Mucosa of descending colon (tissue), 3 donors: ENCODE measurements at regions of chr12 and their contacts with region 1.

Region 1: DNA sequence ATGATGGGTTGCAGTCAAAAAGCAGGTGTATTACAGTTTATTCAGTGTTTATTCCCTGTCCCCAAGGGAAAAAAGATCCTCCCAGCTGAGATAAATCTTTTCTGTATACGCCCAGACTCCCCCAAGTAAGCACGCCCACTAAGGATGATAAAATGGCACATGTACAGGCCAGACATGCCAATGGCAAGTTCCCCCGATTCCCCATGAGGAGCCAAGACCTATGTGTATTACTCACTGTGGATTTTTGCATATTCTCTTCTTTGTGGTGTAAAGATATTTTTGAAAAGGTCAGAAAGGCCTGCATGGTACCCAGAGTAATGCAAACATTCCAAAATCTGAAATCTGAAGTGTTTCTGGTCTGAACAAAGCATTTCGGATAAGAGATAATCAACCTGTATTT is 22.2 kb downstream of the NR2C1 start:
- DNase-seq: no peak
- ATAC-seq: no peak
- H3K4me3 ChIP-seq: no peak overlapping the region
- H3K4me1 ChIP-seq: no peaks in the 10 kb centered on the region
- CTCF ChIP-seq: no peak

Region 2: DNA sequence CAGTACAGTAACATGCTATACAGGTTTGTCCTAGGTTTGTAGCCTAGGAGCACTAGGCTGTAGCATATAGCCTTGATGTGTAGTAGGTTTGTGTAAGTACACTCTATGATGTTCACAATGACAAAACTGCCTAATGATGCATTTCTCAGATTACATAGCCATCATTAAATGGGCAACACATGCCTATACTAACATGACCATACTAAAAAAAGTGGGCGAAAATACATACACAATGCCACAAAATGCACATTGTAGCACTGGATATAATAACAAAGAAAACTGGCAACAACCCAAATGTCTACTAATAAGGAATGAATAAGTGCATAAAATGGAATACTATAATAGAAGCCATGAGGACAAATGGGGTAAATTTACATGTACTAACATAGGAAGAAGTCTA is 16.5 kb before region 1 on chr12:
- intact Hi-C with region 1: loop called in 1 of 2 experiments (anchors 2 kb)
- DNase-seq: no peak
- ATAC-seq: no peak
- H3K4me3 ChIP-seq: no peak overlapping the region
- H3K4me1 ChIP-seq: no peaks in the 10 kb centered on the region
- CTCF ChIP-seq: no peak